Kidney (tissue), 22 donors: ENCODE measurements at regions of chr3 and their contacts with region 1.

Region 1: GRCh38 chr3:155712008-155712407 is 32.9 kb downstream of the PLCH1 start:
- DNase-seq: no peak
- H3K4me3 ChIP-seq: no peak overlapping the region
- H3K27ac ChIP-seq: no peak overlapping the region
- H3K4me1 ChIP-seq: no peaks in the 10 kb centered on the region
- H3K27me3 ChIP-seq: no peaks in the 10 kb centered on the region
- CTCF ChIP-seq: no peak

Region 2: GRCh38 chr3:155352900-155353490 is 359.0 kb before region 1 on chr3:
- intact Hi-C with region 1: loop called (anchors 10 kb)
- DNase-seq: peak in 2 of 5 donors; percentile 43 to 65
- H3K4me3 ChIP-seq: no peak overlapping the region
- H3K27ac ChIP-seq: no peak overlapping the region
- H3K4me1 ChIP-seq: no peaks in the 10 kb centered on the region
- H3K27me3 ChIP-seq: no peaks in the 10 kb centered on the region
- CTCF ChIP-seq: peak; percentile 50

Region 3: DNA sequence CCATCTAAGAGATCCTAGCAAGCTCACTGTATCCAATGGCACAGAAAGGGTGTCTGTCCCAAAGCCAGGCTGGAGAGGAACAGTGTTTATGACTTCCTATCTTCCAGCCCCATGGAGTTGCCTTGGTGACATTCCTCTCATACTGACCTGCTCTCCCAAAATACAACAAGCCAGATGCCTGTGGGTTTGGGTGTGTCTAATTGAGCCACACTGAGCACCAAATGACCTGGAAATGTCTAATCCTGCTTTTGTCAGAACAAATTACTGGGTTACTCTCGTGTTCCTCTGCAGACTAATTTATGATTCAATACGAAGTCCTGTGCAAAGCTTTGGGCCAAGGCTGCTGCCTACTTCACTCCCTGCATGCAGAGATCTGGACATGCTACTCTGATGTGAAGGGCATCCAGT is 320.5 kb before region 1 on chr3:
- intact Hi-C with region 1: no loop called
- DNase-seq: peak in 1 of 5 donors; percentile 12
- H3K4me3 ChIP-seq: no peak overlapping the region
- H3K27ac ChIP-seq: no peak overlapping the region
- H3K4me1 ChIP-seq: no peaks in the 10 kb centered on the region
- H3K27me3 ChIP-seq: no peaks in the 10 kb centered on the region
- CTCF ChIP-seq: no peak